ENCODE measurements at regions of chr17 and their contacts with region 1.

Region 1: GRCh38 chr17:82022981-82023374 is at the start of gene LRRC45:
- DNase-seq: peak; percentile 100
- H3K4me3 ChIP-seq: peak within 1 kb of the TSS; percentile 88 to 92
- H3K27ac ChIP-seq: peak within 1 kb of the TSS; percentile 41 to 69
- H3K4me1 ChIP-seq: peaks cover 18 to 36% of the 10 kb centered on the region in 2 experiments; a peak in 3 of 4 replicates
- H3K27me3 ChIP-seq: no peaks in the 10 kb centered on the region
- CTCF ChIP-seq: no peak
- EP300 ChIP-seq: no peak
- RAD21 ChIP-seq: no peak
- polyA plus RNA-seq, gene LRRC45: 30.3 and 31.5 TPM in 2 replicates

Region 2: GRCh38 chr17:81733507-81734404 is 289.2 kb before region 1 on chr17:
- CTCF ChIA-PET with region 1: interaction called, 11 read pairs
- POLR2A ChIA-PET with region 1: no interaction called
- DNase-seq: peak; percentile 100
- H3K4me3 ChIP-seq: no peak overlapping the region; a peak in 1 of 4 replicates
- H3K27ac ChIP-seq: no peak overlapping the region
- H3K4me1 ChIP-seq: peaks cover 0 to 5% of the 10 kb centered on the region in 2 experiments; a peak in 1 of 4 replicates
- H3K27me3 ChIP-seq: no peaks in the 10 kb centered on the region; the same call in 1 of the 2 replicates
- CTCF ChIP-seq: peak; percentile 96
- EP300 ChIP-seq: no peak
- RAD21 ChIP-seq: peak; percentile 100

Region 3: GRCh38 chr17:81934850-81935708 is 87.9 kb before region 1 on chr17:
- CTCF ChIA-PET with region 1: interaction called, 64 read pairs
- POLR2A ChIA-PET with region 1: interaction called, 7 read pairs
- DNase-seq: no peak
- H3K4me3 ChIP-seq: no peak overlapping the region
- H3K27ac ChIP-seq: no peak overlapping the region
- H3K4me1 ChIP-seq: peaks cover 6 to 19% of the 10 kb centered on the region in 2 experiments; a peak in 2 of 4 replicates
- H3K27me3 ChIP-seq: no peaks in the 10 kb centered on the region
- CTCF ChIP-seq: no peak
- EP300 ChIP-seq: no peak
- RAD21 ChIP-seq: no peak

Region 4: DNA sequence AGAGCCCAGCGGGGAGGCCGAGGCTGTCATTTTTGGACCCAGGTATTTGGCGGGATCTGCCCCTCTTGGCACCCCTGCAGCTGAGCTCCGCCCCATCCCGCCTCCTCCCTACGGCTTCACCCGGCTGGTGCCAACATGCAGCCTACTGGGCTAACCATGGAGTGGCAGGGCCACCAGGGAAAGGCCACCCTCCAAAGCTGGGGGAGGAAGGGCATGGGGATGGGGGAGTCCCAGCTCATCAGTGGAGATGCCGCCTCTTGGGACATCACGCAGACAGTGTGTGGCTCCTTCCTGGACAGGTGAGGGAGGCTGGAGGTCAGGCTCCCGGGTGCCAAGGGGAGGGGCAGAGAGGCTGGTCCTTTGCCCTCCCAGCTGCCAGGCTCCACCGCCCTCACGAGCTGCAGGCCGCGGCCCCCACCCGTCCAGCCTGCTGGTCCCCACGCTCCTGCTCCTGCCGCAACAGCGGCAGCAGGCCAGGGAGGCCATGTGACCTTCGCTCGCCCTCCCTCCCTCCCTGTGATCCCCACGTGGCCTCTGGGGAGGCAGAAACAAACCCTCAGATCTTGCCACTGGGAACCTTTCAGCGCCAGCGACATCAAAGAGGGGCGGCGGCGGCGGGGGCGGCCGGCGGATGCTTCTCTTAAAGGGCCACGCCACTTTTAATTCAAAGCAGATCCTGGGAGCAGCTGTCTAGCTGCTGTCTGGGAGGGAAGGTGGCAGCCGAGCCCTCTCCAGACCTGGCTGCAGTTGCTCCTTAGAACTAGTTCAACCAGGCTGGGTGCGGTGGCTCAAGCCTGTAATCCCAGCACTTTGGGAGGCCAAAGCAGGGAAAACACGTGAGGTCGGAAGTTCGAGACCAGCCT is 55.2 kb before region 1 on chr17:
- CTCF ChIA-PET with region 1: interaction called, 1,216 read pairs
- POLR2A ChIA-PET with region 1: interaction called, 11 read pairs
- DNase-seq: peak; percentile 97
- H3K4me3 ChIP-seq: no peak overlapping the region
- H3K27ac ChIP-seq: peak overlapping the region in 1 of 2 experiments; percentile 84; a peak in 2 of 4 replicates
- H3K4me1 ChIP-seq: peaks cover 0 to 31% of the 10 kb centered on the region in 2 experiments; a peak in 1 of 4 replicates
- H3K27me3 ChIP-seq: no peaks in the 10 kb centered on the region
- CTCF ChIP-seq: no peak
- EP300 ChIP-seq: 0 out of 4 replicates have a peak, but pooled peaks of 1 of the 2 experiments have one; percentile 12
- RAD21 ChIP-seq: no peak

Region 5: GRCh38 chr17:81991684-81992305 is 31.2 kb before region 1 on chr17:
- CTCF ChIA-PET with region 1: interaction called, 43 read pairs
- POLR2A ChIA-PET with region 1: no interaction called
- DNase-seq: peak; percentile 81
- H3K4me3 ChIP-seq: no peak overlapping the region
- H3K27ac ChIP-seq: peak overlapping the region in 1 of 2 experiments; percentile 91; a peak in 2 of 4 replicates
- H3K4me1 ChIP-seq: peaks cover 0 to 25% of the 10 kb centered on the region in 2 experiments; a peak in 1 of 4 replicates
- H3K27me3 ChIP-seq: no peaks in the 10 kb centered on the region
- CTCF ChIP-seq: no peak
- EP300 ChIP-seq: no peak
- RAD21 ChIP-seq: peak; percentile 27; the same call in 1 of the 2 replicates

Region 6: DNA sequence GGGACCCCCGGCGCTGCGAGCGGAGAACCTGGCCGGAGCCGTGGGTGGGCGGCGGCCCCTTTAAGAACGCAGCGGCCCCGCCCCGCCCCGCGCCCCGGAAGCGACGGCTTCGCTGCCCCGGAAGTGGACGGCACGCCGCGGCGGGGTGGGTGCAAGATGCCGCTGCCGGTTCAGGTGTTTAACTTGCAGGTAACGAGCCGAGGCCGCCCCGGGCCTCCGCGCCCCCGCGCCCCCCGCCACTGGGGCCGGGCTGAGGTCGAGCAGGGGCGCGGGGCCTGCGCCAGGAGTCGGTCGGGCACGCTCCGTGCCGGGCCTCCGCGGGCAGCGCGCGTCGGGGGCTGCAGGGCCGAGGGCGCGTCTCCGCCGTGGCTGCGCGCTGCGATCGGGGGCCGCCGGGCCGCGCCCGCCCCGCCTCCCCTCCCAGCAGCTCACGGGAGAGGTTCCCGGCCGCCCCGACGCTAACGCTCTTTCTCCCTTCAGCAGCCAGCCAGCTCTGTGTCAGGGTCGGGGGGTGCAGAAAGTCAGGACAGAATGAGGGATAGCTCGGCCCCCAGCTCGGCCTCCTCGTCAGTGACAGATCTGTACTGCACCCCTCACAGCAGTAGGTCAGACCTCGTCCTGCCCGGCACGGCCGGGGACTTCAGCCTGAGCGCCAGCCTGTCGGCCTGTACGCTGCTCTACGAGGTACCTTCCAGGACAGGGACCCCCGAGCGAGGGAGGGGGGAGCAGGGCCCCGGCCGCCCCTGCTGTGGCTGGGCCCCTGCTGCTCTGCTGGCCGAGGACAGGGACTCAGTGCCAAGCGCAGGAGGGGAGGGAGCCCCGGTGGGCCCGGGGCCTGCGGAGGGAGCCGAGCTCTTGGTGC is 29.0 kb after region 1 on chr17 and contains the starts of genes GPS1 and RFNG:
- CTCF ChIA-PET with region 1: interaction called, 22 read pairs
- POLR2A ChIA-PET with region 1: no interaction called
- DNase-seq: peak; percentile 99
- H3K4me3 ChIP-seq: peak within 1 kb of the TSS; percentile 99 to 100
- H3K27ac ChIP-seq: peak within 1 kb of the TSS; percentile 37 to 74; a peak in 3 of 4 replicates
- H3K4me1 ChIP-seq: peaks cover 0 to 25% of the 10 kb centered on the region in 2 experiments; a peak in 2 of 4 replicates
- H3K27me3 ChIP-seq: no peaks in the 10 kb centered on the region
- CTCF ChIP-seq: no peak
- EP300 ChIP-seq: no peak; a peak in 1 of 4 replicates
- RAD21 ChIP-seq: no peak
- polyA plus RNA-seq, gene GPS1: 264 and 272 TPM in 2 replicates
- polyA plus RNA-seq, gene RFNG: 54.4 and 68.6 TPM in 2 replicates